K562 (cell line): ENCODE measurements at regions of chr11 and their contacts with region 1.

Region 1: DNA sequence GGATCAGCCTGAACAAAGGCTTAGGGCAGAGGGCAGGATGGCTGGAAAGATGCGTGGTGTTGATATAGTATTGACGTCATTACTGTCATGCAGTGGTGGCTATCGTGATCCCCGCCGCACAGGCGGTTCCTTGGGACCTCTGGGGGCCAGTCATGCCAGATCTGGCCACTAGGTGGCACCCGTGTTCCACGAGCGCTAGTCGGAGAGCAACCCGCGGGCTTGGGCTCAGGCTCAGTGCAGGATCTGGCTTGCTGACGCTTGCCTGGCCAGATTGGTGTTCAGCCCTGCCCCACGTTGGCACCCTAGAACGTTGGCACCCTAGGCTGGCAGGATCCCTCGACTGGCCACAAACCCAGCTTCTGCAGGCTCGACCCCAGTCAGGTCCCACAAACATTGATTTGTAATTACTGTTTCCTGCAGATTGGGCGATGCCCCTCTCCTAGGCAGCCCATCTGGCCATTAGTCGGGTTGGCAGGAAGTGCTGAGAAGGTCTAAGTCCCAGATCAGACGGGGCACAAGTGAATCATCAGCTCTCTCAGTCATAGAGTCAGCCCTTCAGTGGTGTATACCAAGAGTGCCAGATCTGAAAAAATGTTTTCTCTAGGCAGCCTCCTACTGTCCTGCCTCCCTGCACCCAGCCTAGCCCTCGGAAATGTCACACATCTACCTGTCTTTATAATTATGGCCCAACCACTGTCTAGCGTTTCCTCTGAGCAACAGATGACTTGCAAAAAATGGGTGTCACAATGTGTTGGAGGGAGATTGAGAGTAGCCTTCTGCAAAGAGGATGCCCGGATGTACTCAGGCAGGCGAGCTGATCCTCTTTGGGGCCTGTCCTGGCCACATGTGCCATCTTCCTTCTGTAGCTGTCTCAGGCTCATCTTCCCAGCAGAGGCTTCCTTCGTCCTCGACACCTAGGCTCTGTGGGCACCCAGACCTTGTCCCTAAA is 315.3 kb downstream of the TMEM135 start:
- DNase-seq: peak; percentile 82 to 90 (median 86)
- ATAC-seq: peak; percentile 98
- H3K4me3 ChIP-seq: no peak overlapping the region
- H3K27ac ChIP-seq: no peak overlapping the region
- H3K4me1 ChIP-seq: peaks cover 3 to 4% of the 10 kb centered on the region in 2 experiments; a peak in 4 of 5 replicates
- H3K27me3 ChIP-seq: peaks cover 2 to 8% of the 10 kb centered on the region in 2 experiments; a peak in 1 of 5 replicates
- CTCF ChIP-seq: peak; percentile 92 to 97 (median 94)
- EP300 ChIP-seq: no peak
- POLR2A ChIP-seq: no peak
- RAD21 ChIP-seq: peak; percentile 86 to 95

Region 2: GRCh38 chr11:87290304-87290922 is 62.6 kb before region 1 on chr11:
- CTCF ChIA-PET with region 1: no interaction called
- POLR2A ChIA-PET with region 1: no interaction called
- in situ Hi-C with region 1: no loop called
- intact Hi-C with region 1: no loop called
- DNase-seq: peak; percentile 25 to 72 (median 33)
- ATAC-seq: peak; percentile 80
- H3K4me3 ChIP-seq: no peak overlapping the region
- H3K27ac ChIP-seq: no peak overlapping the region
- H3K4me1 ChIP-seq: no peaks in the 10 kb centered on the region
- H3K27me3 ChIP-seq: no peaks in the 10 kb centered on the region
- CTCF ChIP-seq: peak in 2 of 3 experiments; percentile 42 to 80; a peak in 3 of 6 replicates
- EP300 ChIP-seq: no peak
- POLR2A ChIP-seq: no peak
- RAD21 ChIP-seq: peak; percentile 88 to 90

Region 3: DNA sequence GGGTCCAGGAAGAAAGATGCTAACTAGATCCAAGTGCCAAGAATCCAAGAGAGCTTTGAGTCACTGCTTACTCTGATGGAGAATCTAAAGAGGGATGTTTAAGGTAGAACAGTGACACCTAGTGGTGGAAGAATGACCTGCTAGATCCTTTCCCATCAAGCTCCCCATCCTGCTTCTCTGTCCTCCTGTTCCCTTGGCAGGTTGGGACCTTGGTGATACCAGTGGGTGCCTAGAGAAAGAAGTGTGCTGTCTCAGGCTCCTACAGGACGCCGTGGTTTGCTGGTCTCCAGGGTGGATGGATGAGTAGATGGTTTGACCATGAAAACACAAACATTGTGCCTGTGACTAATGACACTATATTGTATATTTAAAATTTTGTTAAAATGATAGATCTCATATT is 68.4 kb after region 1 on chr11:
- CTCF ChIA-PET with region 1: interaction called, 14 read pairs
- POLR2A ChIA-PET with region 1: interaction called, 3 read pairs
- in situ Hi-C with region 1: loop called (anchors 5 kb)
- intact Hi-C with region 1: loop called (anchors 1 kb)
- DNase-seq: peak; percentile 70 to 82 (median 77)
- ATAC-seq: peak; percentile 97
- H3K4me3 ChIP-seq: no peak overlapping the region
- H3K27ac ChIP-seq: no peak overlapping the region
- H3K4me1 ChIP-seq: no peaks in the 10 kb centered on the region
- H3K27me3 ChIP-seq: no peaks in the 10 kb centered on the region
- CTCF ChIP-seq: peak; percentile 62 to 78 (median 66)
- EP300 ChIP-seq: no peak
- POLR2A ChIP-seq: no peak
- RAD21 ChIP-seq: peak; percentile 64 to 85

Region 4: DNA sequence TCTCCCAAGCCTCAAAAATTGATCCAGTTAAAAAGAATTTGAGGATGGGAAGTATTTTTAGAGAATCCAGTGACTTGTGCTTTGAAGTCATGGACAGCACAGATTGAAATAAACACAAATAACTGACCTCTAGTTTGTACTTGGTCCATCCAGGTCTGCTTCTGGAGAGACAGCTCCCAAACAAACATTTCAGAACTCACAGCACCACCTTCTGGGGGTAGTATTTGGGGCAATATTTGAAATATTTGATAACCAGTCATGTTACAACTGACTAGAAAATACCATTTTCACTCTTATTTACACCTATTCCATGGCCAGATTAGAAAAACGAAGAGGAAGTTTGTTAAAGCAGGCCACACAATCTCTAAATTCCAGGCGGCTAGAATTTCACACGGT is 928.3 kb after region 1 on chr11:
- CTCF ChIA-PET with region 1: no interaction called
- POLR2A ChIA-PET with region 1: no interaction called
- in situ Hi-C with region 1: no loop called
- intact Hi-C with region 1: loop called (anchors 10 kb)
- DNase-seq: no peak
- ATAC-seq: no peak
- H3K4me3 ChIP-seq: no peak overlapping the region
- H3K27ac ChIP-seq: no peak overlapping the region
- H3K4me1 ChIP-seq: no peaks in the 10 kb centered on the region
- H3K27me3 ChIP-seq: no peaks in the 10 kb centered on the region
- CTCF ChIP-seq: peak in 2 of 3 experiments; percentile 12 to 24; a peak in 2 of 6 replicates
- EP300 ChIP-seq: no peak
- POLR2A ChIP-seq: no peak
- RAD21 ChIP-seq: 0 out of 4 replicates have a peak, but pooled peaks of 1 of the 2 experiments have one; percentile 13